ENCODE measurements at regions of chr9 and their contacts with region 1.

Region 1: GRCh38 chr9:123120131-123120530 is 86.7 kb downstream of the GPR21 start:
- DNase-seq: no peak
- ATAC-seq: no peak

Region 2: DNA sequence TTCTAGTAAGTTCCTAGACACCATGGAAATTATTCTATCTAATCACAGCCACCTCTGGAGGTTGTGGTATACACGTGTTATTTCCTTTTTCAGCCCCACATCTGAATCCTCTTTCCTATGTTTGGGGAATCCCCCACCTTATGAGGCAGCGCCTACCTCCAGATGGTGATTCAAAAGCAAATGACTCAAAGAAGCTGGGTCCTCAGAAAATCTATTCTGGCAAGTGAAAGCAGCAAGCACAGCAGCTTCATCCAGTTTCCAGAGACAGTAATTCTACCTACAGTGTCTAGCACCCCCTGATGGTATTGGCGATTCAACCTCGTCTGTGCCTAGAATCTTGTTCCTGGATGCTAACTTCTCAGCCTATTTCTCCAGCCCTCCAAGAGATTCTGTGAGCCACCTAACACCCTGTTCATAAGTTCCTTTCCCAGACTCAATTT is 105.3 kb after region 1 on chr9:
- intact Hi-C with region 1: loop called in 1 of 2 experiments (anchors 10 kb)
- DNase-seq: no peak
- ATAC-seq: peak in 1 of 2 donors; percentile 90